Common myeloid progenitor, CD34-positive (primary cell): ENCODE measurements at regions of chr22 and their contacts with region 1.

Region 1: GRCh38 chr22:32858116-32858703 is 56.7 kb downstream of the TIMP3 start:
- DNase-seq: no peak
- H3K4me3 ChIP-seq: no peak overlapping the region
- H3K27ac ChIP-seq: no peak overlapping the region
- H3K4me1 ChIP-seq: peaks cover 3 to 4% (median 4%) of the 10 kb centered on the region in 4 experiments
- H3K27me3 ChIP-seq: no peaks in the 10 kb centered on the region

Region 2: DNA sequence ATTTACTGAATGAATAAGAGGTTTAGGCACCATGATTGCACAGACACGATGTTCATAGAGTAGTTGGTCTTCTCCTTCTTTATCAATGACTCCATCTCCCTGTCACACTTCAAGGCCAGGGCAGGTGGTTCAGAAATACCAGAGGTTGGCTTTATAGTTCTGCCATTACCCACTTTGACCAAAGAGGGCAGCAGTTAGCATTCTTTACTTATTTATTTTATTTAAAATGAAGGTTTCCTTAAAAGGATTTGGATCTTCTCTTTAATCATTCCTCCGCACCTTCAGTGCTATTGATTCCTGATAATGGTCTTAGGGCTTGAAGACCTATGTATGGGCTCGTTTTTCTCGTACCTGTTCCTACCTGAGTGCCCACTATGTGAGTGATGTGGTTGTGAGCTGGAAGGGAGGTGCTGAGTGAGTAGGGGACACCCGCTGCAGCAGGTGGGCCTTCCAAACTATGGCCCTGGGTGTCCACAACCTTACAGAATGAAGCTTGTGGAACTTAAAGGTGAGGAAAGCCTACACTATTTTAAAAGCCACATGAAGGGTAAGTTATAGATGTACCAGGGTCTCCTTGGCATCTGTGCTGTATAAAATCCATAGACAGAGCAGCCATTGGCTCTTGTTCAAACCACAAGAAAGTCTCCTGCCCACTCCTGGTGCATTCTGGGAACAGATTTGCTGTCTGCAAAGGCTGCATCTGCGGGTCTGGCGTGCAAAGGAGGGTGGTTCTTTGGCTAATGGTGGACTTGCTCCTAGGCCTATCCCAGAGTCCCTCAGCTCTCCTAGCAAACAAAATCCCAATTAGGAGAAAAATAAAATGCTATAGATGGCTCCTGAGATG is 21.7 kb before region 1 on chr22:
- CTCF ChIA-PET with region 1: interaction called, 12 read pairs
- POLR2A ChIA-PET with region 1: no interaction called
- DNase-seq: peak; percentile 36 to 57 (median 55)
- H3K4me3 ChIP-seq: no peak overlapping the region
- H3K27ac ChIP-seq: no peak overlapping the region
- H3K4me1 ChIP-seq: peaks cover 0 to 21% (median 8%) of the 10 kb centered on the region in 4 experiments
- H3K27me3 ChIP-seq: no peaks in the 10 kb centered on the region

Region 3: GRCh38 chr22:32874976-32875375 is 16.8 kb after region 1 on chr22:
- CTCF ChIA-PET with region 1: interaction called, 10 read pairs
- POLR2A ChIA-PET with region 1: no interaction called
- DNase-seq: peak in 2 of 3 donors; percentile 56 to 67
- H3K4me3 ChIP-seq: no peak overlapping the region
- H3K27ac ChIP-seq: no peak overlapping the region
- H3K4me1 ChIP-seq: peaks cover 12 to 42% (median 20%) of the 10 kb centered on the region in 4 experiments
- H3K27me3 ChIP-seq: no peaks in the 10 kb centered on the region

Region 4: DNA sequence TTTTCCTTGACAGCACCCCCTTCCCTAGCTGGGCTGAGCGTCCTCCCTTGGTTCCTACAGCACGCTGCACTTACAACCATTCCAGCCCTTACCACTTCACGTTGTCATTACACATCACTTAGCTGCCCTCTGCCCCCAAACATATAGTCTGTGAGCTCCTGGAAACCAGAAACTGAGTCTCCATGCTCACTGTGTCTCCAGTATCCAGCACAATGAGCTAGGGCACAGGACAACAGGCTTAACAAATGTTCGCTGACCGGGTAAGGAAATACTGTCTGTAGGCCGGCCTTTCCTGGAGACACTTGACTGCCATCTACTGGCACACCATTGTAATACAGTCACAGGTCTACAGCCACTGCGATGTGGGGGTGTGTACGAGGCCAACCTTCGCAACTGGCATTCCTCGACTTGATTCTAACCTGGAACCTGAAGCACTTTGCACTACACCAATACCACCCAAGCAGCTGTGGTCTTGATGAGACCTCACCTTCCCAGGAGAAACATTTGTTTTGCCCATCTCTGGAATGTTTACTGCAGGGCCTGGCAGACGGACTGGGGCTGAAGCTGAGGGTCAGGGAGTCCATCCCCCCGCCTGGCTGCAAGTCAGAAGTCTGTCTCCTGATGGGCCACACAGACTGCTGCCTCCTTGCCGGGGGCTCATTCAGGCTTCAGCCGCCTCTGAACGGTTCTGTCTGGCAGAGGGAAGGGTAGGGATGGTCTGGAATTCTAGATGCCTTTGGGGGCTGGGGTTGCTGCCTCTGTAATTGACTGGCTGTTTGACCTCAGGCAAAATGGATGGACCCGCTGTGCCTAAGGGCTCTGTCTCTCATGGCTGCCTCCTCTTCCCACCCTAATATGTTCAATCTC is 127.9 kb after region 1 on chr22:
- CTCF ChIA-PET with region 1: no interaction called
- POLR2A ChIA-PET with region 1: no interaction called
- DNase-seq: peak; percentile 73 to 83 (median 79)
- H3K4me3 ChIP-seq: no peak overlapping the region
- H3K27ac ChIP-seq: no peak overlapping the region
- H3K4me1 ChIP-seq: peaks cover 0 to 6% (median 0%) of the 10 kb centered on the region in 4 experiments
- H3K27me3 ChIP-seq: no peaks in the 10 kb centered on the region